Ascending aorta (tissue), 2 donors: ENCODE measurements at regions of chr18 and their contacts with region 1.

Region 1: DNA sequence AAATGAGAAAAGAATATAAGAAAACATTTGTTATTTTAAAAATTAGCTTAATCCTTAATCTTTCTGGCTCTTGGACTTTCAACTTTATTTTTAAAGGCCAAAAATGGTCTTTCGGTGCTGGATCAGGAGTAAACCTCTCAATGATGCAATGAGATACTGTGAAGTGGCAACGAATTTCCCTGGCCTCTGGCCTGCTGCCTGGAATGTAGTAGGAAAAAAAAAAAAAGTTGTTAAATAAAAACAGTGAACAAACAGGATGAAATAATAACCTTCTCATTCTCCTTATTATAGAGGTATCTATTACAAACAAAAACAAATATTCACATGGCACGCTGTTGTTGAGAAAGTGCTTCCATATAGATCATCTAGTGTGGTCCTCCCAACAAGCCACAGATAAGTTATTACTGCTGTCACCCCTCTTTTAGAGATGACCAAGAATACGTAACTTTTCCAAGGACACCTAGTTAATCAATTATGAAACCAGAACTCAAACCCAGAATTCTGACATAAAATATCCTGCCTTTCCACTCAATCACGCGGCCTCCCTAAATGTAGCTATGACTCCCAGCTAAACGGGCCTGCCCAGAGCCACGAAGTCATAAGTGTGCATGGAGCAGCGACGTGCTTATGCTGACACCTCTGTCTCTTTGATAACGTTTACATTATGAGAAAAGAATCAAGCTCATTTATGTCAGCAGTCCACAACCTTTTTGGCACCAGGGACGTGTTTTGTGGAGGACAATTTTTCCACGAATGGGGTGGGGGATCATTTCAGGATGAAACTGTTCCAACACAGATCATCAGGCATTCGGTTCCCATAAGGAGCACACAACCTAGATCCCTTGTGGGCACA is 170.9 kb downstream of the BCL2 start:
- DNase-seq: peak in 1 of 2 donors; percentile 79
- H3K4me3 ChIP-seq: no peak overlapping the region
- H3K27ac ChIP-seq: peak overlapping the region; percentile 7 to 75
- H3K4me1 ChIP-seq: peaks cover 3 to 50% of the 10 kb centered on the region in 2 donors
- H3K27me3 ChIP-seq: no peaks in the 10 kb centered on the region
- CTCF ChIP-seq: no peak

Region 2: GRCh38 chr18:63237881-63238667 is 89.4 kb after region 1 on chr18:
- intact Hi-C with region 1: loop called (anchors 5 kb)
- DNase-seq: peak in 1 of 2 donors; percentile 84
- H3K4me3 ChIP-seq: peak overlapping the region; percentile 15 to 18
- H3K27ac ChIP-seq: peak overlapping the region; percentile 91
- H3K4me1 ChIP-seq: peaks cover 0 to 24% of the 10 kb centered on the region in 2 donors
- H3K27me3 ChIP-seq: no peaks in the 10 kb centered on the region
- CTCF ChIP-seq: peak in 1 of 3 experiments; percentile 6